ENCODE measurements at regions of chr1 and their contacts with region 1.

Region 1: GRCh38 chr1:41432481-41433280 is 51.8 kb downstream of the EDN2 start:
- DNase-seq: peak; percentile 90
- H3K4me3 ChIP-seq: no peak overlapping the region
- H3K27ac ChIP-seq: peak overlapping the region in 2 of 4 donors; percentile 35 to 48
- H3K4me1 ChIP-seq: peaks cover 13 to 24% (median 17%) of the 10 kb centered on the region in 4 donors
- H3K27me3 ChIP-seq: peaks cover 5% of the 10 kb centered on the region
- CTCF ChIP-seq: peak; percentile 84 to 96 (median 88)
- EP300 ChIP-seq: no peak
- POLR2A ChIP-seq: no peak

Region 2: GRCh38 chr1:41268154-41268770 is 164.4 kb before region 1 on chr1:
- in situ Hi-C with region 1: loop called in 3 of 4 experiments (anchors 5 to 10 kb)
- intact Hi-C with region 1: no loop called
- DNase-seq: peak; percentile 78
- H3K4me3 ChIP-seq: no peak overlapping the region
- H3K27ac ChIP-seq: no peak overlapping the region
- H3K4me1 ChIP-seq: no peaks in the 10 kb centered on the region
- H3K27me3 ChIP-seq: no peaks in the 10 kb centered on the region
- CTCF ChIP-seq: peak; percentile 93 to 99 (median 98)
- EP300 ChIP-seq: no peak
- POLR2A ChIP-seq: no peak

Region 3: DNA sequence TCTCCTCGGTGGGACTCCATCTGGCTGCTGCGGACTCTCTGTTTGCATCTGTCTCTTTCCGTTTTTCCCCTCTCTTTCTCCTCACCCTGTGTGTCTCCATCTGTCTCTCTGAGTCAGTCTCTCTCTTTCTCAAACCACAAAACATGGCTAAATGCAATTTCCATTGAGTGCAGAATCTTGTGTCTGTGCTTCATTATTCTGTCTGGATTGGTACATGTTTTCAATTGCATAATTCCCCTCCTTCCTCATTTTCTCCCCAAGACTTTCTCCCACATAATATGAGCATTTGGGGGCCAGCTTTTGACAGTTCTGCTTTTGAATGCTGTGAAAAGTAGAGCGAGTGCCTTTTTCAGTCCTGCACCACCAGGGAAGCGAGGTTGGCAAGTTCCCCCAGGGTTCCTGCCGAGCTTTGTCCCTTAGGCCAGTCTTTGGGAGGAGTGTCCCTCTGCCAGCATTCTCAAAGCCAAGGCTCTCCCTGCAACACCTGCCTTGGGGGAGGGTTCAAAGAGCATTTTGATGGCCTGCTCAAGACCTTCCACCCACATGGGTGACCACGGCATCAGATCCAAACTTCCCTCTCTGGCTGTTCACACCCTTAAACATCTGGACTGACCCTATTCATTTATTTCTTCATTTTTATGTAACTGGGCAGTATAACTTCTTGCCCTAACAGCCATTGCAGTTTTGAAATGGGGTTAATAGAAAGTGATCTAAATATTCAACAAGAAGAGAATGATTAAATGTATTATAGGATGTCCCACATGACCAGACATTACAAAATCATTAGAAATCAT is 157.7 kb before region 1 on chr1:
- in situ Hi-C with region 1: loop called in 1 of 4 experiments (anchors 10 kb)
- intact Hi-C with region 1: no loop called
- DNase-seq: no peak
- H3K4me3 ChIP-seq: no peak overlapping the region
- H3K27ac ChIP-seq: no peak overlapping the region
- H3K4me1 ChIP-seq: no peaks in the 10 kb centered on the region
- H3K27me3 ChIP-seq: no peaks in the 10 kb centered on the region
- CTCF ChIP-seq: no peak
- EP300 ChIP-seq: no peak
- POLR2A ChIP-seq: no peak

Measured in transverse colon (tissue), 4 donors.